ENCODE measurements at regions of chr20 and their contacts with region 1.

Region 1: GRCh38 chr20:49245921-49246740 is 26.9 kb downstream of the DDX27 start:
- DNase-seq: peak; percentile 40
- ATAC-seq: peak; percentile 90
- H3K4me3 Mint-ChIP-seq: no peak overlapping the region
- H3K27ac Mint-ChIP-seq: peak overlapping the region; percentile 69
- H3K4me1 Mint-ChIP-seq: no peaks in the 10 kb centered on the region
- H3K27me3 Mint-ChIP-seq: no peaks in the 10 kb centered on the region
- CTCF ChIP-seq: no peak

Region 2: GRCh38 chr20:48912065-48912762 is 333.9 kb before region 1 on chr20:
- CTCF ChIA-PET with region 1: no interaction called
- POLR2A ChIA-PET with region 1: no interaction called
- intact Hi-C with region 1: no loop called
- DNase-seq: no peak
- ATAC-seq: no peak
- H3K4me3 Mint-ChIP-seq: no peak overlapping the region
- H3K27ac Mint-ChIP-seq: no peak overlapping the region
- H3K4me1 Mint-ChIP-seq: peaks cover 2% of the 10 kb centered on the region
- H3K27me3 Mint-ChIP-seq: peaks cover 3% of the 10 kb centered on the region
- CTCF ChIP-seq: no peak

Region 3: DNA sequence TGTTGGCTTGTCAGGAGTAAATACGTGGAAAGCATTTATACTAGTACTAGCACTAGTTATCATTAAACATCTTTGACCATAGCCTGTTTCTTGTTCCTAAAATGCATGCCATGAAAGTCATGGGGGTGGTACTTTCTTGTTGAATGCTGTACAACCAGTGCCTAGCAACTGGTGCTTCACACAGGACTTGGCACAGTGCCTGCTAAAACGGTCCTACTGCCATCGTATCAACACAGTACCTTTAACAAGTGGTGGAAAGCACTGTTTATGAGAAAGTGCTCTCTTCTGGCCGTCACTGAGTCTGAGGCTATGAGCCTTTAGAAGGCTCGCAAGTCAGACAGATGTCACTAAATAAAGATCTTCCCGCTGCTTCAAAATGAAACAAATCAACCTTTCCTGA is 10.1 kb after region 1 on chr20:
- CTCF ChIA-PET with region 1: interaction called, 12 read pairs
- POLR2A ChIA-PET with region 1: interaction called, 37 read pairs
- intact Hi-C with region 1: no loop called
- DNase-seq: no peak
- ATAC-seq: no peak
- H3K4me3 Mint-ChIP-seq: no peak overlapping the region
- H3K27ac Mint-ChIP-seq: no peak overlapping the region
- H3K4me1 Mint-ChIP-seq: peaks cover 15% of the 10 kb centered on the region
- H3K27me3 Mint-ChIP-seq: no peaks in the 10 kb centered on the region
- CTCF ChIP-seq: no peak

Region 4: GRCh38 chr20:49268600-49269365 is 22.7 kb after region 1 on chr20:
- CTCF ChIA-PET with region 1: interaction called, 8 read pairs
- POLR2A ChIA-PET with region 1: interaction called, 12 read pairs
- intact Hi-C with region 1: no loop called
- DNase-seq: no peak
- ATAC-seq: no peak
- H3K4me3 Mint-ChIP-seq: peak overlapping the region; percentile 73
- H3K27ac Mint-ChIP-seq: peak overlapping the region; percentile 71
- H3K4me1 Mint-ChIP-seq: peaks cover 59% of the 10 kb centered on the region
- H3K27me3 Mint-ChIP-seq: no peaks in the 10 kb centered on the region
- CTCF ChIP-seq: no peak